Calu3 (cell line): ENCODE measurements at regions of chrX and their contacts with region 1.

Region 1: DNA sequence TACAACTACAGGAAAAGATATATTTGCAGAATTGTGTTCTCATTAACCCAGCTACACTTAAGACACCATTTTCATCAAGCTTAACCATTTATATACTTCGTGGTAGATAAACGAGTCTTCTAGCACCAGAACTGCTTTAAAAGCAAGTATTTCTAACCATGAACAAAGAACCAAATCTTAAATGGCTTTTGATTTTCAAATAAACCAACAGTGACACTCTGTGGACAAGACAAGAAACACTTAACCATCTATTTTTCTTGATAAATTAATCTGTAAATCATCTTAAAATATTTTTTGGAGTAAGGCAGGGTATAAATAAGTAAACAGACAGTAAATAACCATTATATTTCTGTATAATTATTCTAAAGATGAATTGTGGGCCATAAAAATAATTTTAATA is 10.2 kb downstream of the BEND2 start:
- DNase-seq: no peak
- H3K4me3 Mint-ChIP-seq: no peak overlapping the region
- H3K27ac Mint-ChIP-seq: no peak overlapping the region
- H3K4me1 Mint-ChIP-seq: no peaks in the 10 kb centered on the region
- H3K27me3 Mint-ChIP-seq: peaks cover 30% of the 10 kb centered on the region
- CTCF ChIP-seq: no peak

Region 2: GRCh38 chrX:17744896-17745523 is 465.5 kb before region 1 on chrX:
- CTCF ChIA-PET with region 1: no interaction called
- intact Hi-C with region 1: loop called (anchors 2 kb)
- DNase-seq: no peak
- H3K4me3 Mint-ChIP-seq: peak overlapping the region; percentile 12
- H3K27ac Mint-ChIP-seq: no peak overlapping the region
- H3K4me1 Mint-ChIP-seq: peaks cover 18% of the 10 kb centered on the region
- H3K27me3 Mint-ChIP-seq: no peaks in the 10 kb centered on the region
- CTCF ChIP-seq: peak; percentile 17

Region 3: GRCh38 chrX:17812763-17813162 is 397.7 kb before region 1 on chrX:
- CTCF ChIA-PET with region 1: no interaction called
- intact Hi-C with region 1: loop called (anchors 2 kb)
- DNase-seq: no peak
- H3K4me3 Mint-ChIP-seq: no peak overlapping the region
- H3K27ac Mint-ChIP-seq: no peak overlapping the region
- H3K4me1 Mint-ChIP-seq: no peaks in the 10 kb centered on the region
- H3K27me3 Mint-ChIP-seq: peaks cover 73% of the 10 kb centered on the region
- CTCF ChIP-seq: peak; percentile 45

Region 4: DNA sequence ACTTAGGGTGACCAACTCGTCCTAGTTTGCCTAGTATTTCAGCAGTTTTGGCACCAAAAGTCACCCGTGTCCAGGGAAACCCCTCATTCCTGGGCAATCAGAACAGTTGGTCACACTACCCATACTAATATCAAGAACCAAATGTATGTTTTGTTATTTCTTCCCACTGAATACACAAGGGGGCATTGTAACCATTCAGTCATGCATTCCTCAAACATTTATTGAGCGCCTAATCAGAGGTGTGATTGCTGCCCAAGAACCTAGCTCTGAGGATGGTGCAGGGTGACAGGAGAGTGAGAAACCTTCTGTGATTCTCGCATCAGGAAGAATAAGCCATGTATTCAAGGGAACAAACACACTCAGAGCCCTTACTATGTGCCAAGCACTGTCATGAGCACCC is 279.6 kb before region 1 on chrX:
- CTCF ChIA-PET with region 1: no interaction called
- intact Hi-C with region 1: loop called (anchors 10 kb)
- DNase-seq: no peak
- H3K4me3 Mint-ChIP-seq: no peak overlapping the region
- H3K27ac Mint-ChIP-seq: no peak overlapping the region
- H3K4me1 Mint-ChIP-seq: no peaks in the 10 kb centered on the region
- H3K27me3 Mint-ChIP-seq: peaks cover 31% of the 10 kb centered on the region
- CTCF ChIP-seq: no peak